AG04449 (cell line): ENCODE measurements at regions of chr15 and their contacts with region 1.

Region 1: DNA sequence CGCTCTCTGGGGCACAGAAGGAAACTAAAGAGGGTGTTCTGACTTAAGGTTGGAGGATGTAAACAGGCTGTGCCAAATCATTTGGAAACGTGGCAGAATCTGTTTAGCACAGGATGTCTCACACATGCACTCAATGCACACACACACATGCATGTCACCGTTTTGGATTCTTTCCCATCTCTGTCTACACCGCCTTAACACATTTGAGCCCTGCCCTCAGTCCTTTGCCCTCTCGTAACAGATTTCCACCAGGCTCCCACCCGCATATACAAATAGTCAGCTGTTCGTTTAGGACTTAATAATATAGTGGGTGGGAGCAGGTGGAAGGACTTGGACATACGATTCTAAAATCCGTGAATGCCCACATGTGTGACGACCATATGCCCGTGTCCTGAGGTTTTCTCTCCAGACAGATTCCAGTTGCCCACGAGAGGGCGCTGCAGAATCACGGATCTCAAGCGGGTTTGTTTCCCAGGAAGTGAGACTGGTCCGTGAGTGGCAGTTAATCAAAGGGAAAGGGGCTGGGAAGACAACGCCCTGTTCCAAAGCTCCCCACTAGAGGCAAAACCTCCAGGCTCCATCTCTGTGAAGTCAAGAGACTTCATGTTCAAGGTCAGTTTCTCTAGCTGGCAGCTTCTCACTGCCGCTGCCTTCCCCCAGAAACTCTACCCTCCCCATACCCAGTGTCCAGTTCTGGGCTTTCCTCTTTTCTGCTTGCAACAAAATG is 44.5 kb downstream of the NOX5 start:
- DNase-seq: no peak
- H3K4me3 ChIP-seq: no peak overlapping the region
- CTCF ChIP-seq: peak; percentile 81

Region 2: GRCh38 chr15:68962465-68962864 is 96.5 kb before region 1 on chr15:
- CTCF ChIA-PET with region 1: no interaction called
- POLR2A ChIA-PET with region 1: no interaction called
- DNase-seq: no peak
- H3K4me3 ChIP-seq: no peak overlapping the region
- CTCF ChIP-seq: no peak

Region 3: DNA sequence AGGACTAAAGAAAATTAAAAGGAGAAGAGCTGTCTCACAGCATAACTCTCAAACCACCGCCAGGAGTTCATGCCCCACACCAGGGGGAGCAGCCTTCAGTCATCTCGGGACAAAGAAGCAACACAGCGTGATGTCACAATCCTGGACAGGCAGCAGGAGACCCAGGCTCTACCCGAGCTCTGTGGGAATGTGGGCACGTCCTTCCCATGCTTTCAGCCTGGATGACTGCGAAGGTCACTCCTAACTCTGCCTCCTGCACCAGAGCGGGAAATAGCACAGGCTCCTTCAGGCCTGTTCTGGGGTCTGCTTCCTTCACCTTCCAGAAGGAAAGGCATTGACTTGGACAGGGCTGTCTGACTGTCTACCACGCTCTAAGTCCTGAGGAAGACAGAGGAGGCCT is 13.2 kb before region 1 on chr15:
- CTCF ChIA-PET with region 1: interaction called, 44 read pairs
- POLR2A ChIA-PET with region 1: no interaction called
- DNase-seq: no peak
- H3K4me3 ChIP-seq: no peak overlapping the region
- CTCF ChIP-seq: peak; percentile 30

Region 4: DNA sequence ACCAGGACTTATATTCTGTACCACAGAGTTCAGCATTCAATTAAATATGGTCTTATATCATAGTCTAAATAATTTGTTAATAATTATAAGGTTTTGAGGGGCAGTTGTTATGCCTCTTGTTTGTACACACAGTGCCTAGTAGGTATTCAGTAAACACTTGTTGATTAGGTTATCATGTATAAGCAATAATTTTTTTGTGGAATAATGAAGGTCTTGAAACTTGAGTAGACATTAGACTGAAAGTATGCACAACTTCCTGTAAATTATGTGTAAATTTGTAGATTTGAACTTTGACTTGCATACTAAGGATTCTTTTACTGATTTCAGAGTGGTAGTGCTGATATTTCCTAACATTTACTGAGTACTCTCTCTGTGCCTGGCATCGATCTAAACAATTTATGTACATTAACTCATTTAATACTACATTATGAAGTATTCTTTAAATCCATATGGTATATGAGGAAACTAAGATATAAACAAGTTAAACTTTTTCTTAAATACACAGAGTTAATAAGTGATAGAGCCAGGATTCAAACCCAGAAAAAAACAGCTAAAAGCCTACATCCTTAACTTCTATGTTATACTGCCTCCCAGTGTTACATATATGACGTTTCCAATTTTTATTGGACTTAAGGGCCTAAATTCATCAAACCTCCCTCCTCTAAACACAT is 166.5 kb after region 1 on chr15:
- CTCF ChIA-PET with region 1: interaction called, 142 read pairs
- POLR2A ChIA-PET with region 1: no interaction called
- DNase-seq: peak; percentile 10
- H3K4me3 ChIP-seq: no peak overlapping the region
- CTCF ChIP-seq: no peak

Region 5: DNA sequence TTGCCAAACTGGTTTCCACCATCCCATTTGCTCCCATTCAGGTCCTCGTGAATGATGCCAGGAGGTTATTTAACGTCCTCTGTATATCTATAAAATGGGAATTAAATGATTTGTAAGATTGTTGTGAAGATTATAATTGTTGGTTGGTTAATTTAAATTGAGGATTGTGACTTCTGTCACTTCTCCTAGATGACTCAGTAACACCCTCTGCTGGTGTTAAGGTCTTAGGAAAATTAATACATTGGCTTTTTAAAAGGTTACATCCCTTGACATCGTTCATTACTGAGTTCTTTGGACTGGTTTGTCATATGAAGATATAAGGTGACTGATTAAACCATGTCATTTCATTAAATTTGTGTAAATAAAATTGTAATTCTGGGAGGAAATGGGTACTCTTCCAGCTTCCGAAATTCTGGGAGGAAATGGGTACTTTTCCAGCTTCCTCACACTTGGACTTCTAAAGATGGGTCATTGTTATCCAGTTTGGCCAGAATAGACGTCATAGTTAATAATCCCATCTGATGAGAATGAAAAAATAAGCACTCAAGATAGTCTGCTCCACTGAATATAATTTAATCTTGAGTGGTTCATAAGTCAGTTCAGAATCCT is 206.5 kb after region 1 on chr15:
- CTCF ChIA-PET with region 1: interaction called, 25 read pairs
- POLR2A ChIA-PET with region 1: no interaction called
- DNase-seq: no peak
- H3K4me3 ChIP-seq: no peak overlapping the region
- CTCF ChIP-seq: peak; percentile 26

Region 6: GRCh38 chr15:69462493-69463181 is 403.6 kb after region 1 on chr15:
- CTCF ChIA-PET with region 1: interaction called, 20 read pairs
- POLR2A ChIA-PET with region 1: no interaction called
- DNase-seq: peak; percentile 96
- H3K4me3 ChIP-seq: peak overlapping the region; percentile 60
- CTCF ChIP-seq: peak; percentile 93